ENCODE measurements at regions of chr3 and their contacts with region 1.

Region 1: GRCh38 chr3:16102905-16103364 is 71.5 kb upstream of the GALNT15 start:
- DNase-seq: peak; percentile 68
- ATAC-seq: peak; percentile 63
- H3K4me3 ChIP-seq: no peak overlapping the region
- H3K27ac ChIP-seq: peak overlapping the region; percentile 97
- H3K4me1 ChIP-seq: peaks cover 22% of the 10 kb centered on the region
- H3K27me3 ChIP-seq: no peaks in the 10 kb centered on the region
- CTCF ChIP-seq: no peak; the same call in 1 of the 2 replicates

Region 2: DNA sequence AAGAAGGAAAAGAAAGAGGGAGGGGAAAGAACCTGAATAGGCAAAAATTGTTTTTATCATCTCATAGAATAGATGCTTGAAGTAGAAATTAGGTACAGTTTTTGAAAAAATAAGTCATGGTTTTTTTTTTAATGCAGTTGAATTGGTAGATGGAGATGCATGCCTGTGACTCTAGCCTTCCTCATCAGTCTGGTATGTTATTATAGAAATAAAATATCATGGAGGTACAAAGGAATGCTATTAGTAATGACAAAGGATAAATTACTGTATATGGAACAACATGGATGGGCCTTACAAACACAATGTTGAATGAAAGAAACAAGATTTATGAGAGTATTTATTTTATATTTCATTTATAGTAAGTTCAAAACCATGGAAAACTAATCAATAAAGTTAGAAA is 90.8 kb before region 1 on chr3:
- CTCF ChIA-PET with region 1: no interaction called
- POLR2A ChIA-PET with region 1: no interaction called
- intact Hi-C with region 1: no loop called
- DNase-seq: peak; percentile 35
- ATAC-seq: no peak
- H3K4me3 ChIP-seq: no peak overlapping the region
- H3K27ac ChIP-seq: no peak overlapping the region
- H3K4me1 ChIP-seq: peaks cover 7% of the 10 kb centered on the region; the same call in 1 of the 2 replicates
- H3K27me3 ChIP-seq: no peaks in the 10 kb centered on the region
- CTCF ChIP-seq: no peak

Region 3: DNA sequence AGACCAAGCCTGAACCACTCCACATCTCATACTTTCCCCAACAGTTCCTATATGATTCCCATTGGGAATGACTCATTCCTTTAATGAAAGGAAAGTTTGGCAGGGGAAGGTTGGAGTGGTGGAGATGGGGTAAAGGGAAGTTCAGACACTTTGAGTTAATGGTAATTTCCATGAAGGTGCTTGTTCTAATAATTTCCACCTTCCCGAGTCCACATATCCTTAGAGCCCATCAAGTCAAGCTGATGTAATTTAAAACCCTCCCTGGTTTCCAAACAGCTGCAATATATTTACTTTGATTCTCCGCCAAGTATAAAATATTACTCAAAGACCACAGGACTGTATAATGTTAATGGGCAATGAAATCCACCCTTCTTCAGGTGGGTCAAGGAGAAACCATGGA is 23.4 kb before region 1 on chr3:
- CTCF ChIA-PET with region 1: no interaction called
- POLR2A ChIA-PET with region 1: no interaction called
- intact Hi-C with region 1: loop called (anchors 1 kb)
- DNase-seq: peak; percentile 97
- ATAC-seq: peak; percentile 91
- H3K4me3 ChIP-seq: no peak overlapping the region
- H3K27ac ChIP-seq: peak overlapping the region; percentile 75
- H3K4me1 ChIP-seq: peaks cover 21% of the 10 kb centered on the region
- H3K27me3 ChIP-seq: no peaks in the 10 kb centered on the region
- CTCF ChIP-seq: no peak

Region 4: GRCh38 chr3:16090024-16090423 is 12.9 kb before region 1 on chr3:
- CTCF ChIA-PET with region 1: no interaction called
- POLR2A ChIA-PET with region 1: no interaction called
- intact Hi-C with region 1: loop called (anchors 1 kb)
- DNase-seq: peak; percentile 98
- ATAC-seq: peak; percentile 96
- H3K4me3 ChIP-seq: no peak overlapping the region
- H3K27ac ChIP-seq: peak overlapping the region; percentile 52
- H3K4me1 ChIP-seq: peaks cover 30% of the 10 kb centered on the region
- H3K27me3 ChIP-seq: no peaks in the 10 kb centered on the region
- CTCF ChIP-seq: no peak

Region 5: DNA sequence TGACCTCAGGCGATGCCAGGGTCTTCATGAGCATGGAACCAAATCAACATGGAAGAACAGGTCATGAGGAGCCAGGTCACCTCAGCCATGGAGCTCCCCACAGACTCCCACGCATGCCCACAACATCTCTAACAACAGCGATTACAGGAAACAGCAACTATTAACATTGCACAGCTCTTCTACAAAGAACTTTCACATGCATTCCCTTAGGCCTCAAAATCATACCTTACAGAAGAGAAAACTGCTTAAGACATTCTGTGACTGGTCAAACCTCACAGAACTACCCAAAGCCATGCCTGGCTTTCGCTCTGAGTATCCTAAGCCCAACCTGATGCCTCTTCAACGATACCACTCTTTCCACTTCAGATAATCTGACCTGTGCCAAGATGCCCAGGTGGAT is 279.9 kb after region 1 on chr3:
- CTCF ChIA-PET with region 1: no interaction called
- POLR2A ChIA-PET with region 1: no interaction called
- intact Hi-C with region 1: no loop called
- DNase-seq: no peak
- ATAC-seq: no peak
- H3K4me3 ChIP-seq: no peak overlapping the region
- H3K27ac ChIP-seq: no peak overlapping the region
- H3K4me1 ChIP-seq: peaks cover 4% of the 10 kb centered on the region; the same call in 1 of the 2 replicates
- H3K27me3 ChIP-seq: no peaks in the 10 kb centered on the region
- CTCF ChIP-seq: no peak

Region 6: GRCh38 chr3:16697443-16698147 is 594.7 kb after region 1 on chr3:
- CTCF ChIA-PET with region 1: no interaction called
- POLR2A ChIA-PET with region 1: no interaction called
- intact Hi-C with region 1: no loop called
- DNase-seq: peak; percentile 22
- ATAC-seq: no peak
- H3K4me3 ChIP-seq: no peak overlapping the region
- H3K27ac ChIP-seq: no peak overlapping the region
- H3K4me1 ChIP-seq: no peaks in the 10 kb centered on the region
- H3K27me3 ChIP-seq: no peaks in the 10 kb centered on the region
- CTCF ChIP-seq: no peak